Activated CD4-positive, alpha-beta T cell treated with anti-CD3 and anti-CD28 coated beads for 36 hours (primary cell): ENCODE measurements at regions of chr1 and their contacts with region 1.

Region 1: DNA sequence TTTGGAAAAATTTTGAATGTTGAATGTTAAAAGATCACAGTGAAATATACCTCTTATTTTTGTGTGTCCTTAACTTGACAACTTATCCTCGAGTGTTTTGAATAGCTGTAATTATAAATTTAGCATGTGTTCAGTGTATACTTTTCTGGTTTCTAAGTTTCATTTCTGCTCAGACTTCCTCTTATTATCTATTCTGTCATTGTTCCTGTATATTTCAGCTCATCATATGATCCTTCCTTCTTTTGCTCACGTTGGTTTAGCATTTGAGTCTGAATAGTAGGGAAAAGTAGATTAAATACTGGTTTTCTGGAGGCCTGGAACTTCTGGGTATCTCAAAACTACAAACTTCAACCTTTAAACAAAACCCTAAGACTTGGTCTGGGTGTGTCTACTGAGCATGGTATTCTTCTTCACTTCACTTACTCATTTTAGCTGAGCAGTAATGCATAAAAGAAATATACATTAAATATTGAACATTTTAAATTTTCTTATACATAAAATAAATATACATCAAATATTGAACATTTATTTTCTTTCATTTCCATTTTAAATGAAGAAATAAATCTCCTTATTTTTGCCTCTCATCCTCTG is 3.3 kb upstream of the ATP6V1G3 start:
- DNase-seq: no peak
- ATAC-seq: no peak
- H3K4me3 Mint-ChIP-seq: no peak overlapping the region
- H3K27ac Mint-ChIP-seq: peak overlapping the region; percentile 39
- H3K4me1 Mint-ChIP-seq: peaks cover 47% of the 10 kb centered on the region
- H3K27me3 Mint-ChIP-seq: no peaks in the 10 kb centered on the region

Region 2: DNA sequence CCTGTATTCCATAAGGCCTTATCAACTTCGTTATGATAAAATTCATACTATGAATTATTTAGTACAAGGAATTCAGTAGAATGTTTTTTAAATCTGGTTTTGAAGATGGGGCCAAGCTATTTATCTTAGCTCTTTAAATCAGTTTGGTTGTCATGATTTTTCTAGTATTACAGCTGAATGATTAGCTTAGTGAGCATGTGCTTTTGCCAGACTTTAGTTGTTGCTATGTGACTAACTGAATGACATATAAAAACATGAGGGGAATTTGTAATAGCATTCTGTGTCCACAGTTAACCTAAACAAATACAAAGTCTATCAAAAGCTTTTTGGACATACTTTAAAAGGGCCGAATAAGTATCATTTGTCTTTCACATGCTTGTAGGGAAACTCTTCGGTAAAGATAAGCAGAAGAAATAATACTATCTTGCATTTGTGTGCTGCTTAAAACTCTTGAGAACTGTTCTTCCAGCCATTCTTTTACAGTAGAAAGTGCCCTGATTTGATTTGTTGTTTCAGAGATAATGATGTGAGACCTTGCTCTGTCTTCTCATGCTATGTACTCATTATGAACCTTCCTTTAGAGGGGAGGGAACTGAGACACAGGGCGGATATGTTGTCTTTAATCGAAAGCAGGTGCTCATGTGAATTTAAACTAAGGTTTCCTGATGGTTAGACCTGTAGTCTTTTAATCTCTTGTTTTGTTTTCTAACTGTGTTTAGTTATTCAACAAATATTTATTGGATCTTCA is 368.2 kb before region 1 on chr1:
- CTCF ChIA-PET with region 1: no interaction called
- POLR2A ChIA-PET with region 1: no interaction called
- intact Hi-C with region 1: no loop called
- DNase-seq: no peak
- ATAC-seq: peak; percentile 86
- H3K4me3 Mint-ChIP-seq: peak overlapping the region; percentile 52
- H3K27ac Mint-ChIP-seq: peak overlapping the region; percentile 82
- H3K4me1 Mint-ChIP-seq: peaks cover 94% of the 10 kb centered on the region
- H3K27me3 Mint-ChIP-seq: no peaks in the 10 kb centered on the region

Region 3: DNA sequence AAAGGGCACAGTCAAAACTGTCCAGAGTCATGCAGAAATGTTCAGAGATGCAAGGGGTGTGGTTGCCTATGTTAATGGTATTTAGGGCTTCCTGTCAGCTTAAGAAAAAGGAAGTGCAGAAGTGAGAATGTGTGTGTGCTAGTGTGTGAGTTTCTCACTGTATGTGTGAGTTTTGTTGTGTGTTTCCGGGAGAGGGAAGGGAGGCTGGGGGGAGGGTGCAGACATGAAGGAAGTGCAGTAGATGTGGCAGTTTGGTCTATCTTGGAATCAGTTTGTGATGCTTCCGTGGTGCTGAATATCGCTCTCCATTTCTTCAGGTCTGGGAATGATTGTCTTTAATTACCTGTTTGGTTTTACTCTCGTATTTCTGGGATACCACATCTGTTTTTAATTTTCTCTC is 13.2 kb after region 1 on chr1:
- CTCF ChIA-PET with region 1: interaction called, 6 read pairs
- POLR2A ChIA-PET with region 1: no interaction called
- intact Hi-C with region 1: loop called in 1 of 2 experiments (anchors 2 kb)
- DNase-seq: peak; percentile 71
- ATAC-seq: peak; percentile 94
- H3K4me3 Mint-ChIP-seq: peak overlapping the region; percentile 68
- H3K27ac Mint-ChIP-seq: peak overlapping the region; percentile 82
- H3K4me1 Mint-ChIP-seq: peaks cover 76% of the 10 kb centered on the region
- H3K27me3 Mint-ChIP-seq: no peaks in the 10 kb centered on the region